ENCODE measurements at regions of chr17 and their contacts with region 1.

Region 1: DNA sequence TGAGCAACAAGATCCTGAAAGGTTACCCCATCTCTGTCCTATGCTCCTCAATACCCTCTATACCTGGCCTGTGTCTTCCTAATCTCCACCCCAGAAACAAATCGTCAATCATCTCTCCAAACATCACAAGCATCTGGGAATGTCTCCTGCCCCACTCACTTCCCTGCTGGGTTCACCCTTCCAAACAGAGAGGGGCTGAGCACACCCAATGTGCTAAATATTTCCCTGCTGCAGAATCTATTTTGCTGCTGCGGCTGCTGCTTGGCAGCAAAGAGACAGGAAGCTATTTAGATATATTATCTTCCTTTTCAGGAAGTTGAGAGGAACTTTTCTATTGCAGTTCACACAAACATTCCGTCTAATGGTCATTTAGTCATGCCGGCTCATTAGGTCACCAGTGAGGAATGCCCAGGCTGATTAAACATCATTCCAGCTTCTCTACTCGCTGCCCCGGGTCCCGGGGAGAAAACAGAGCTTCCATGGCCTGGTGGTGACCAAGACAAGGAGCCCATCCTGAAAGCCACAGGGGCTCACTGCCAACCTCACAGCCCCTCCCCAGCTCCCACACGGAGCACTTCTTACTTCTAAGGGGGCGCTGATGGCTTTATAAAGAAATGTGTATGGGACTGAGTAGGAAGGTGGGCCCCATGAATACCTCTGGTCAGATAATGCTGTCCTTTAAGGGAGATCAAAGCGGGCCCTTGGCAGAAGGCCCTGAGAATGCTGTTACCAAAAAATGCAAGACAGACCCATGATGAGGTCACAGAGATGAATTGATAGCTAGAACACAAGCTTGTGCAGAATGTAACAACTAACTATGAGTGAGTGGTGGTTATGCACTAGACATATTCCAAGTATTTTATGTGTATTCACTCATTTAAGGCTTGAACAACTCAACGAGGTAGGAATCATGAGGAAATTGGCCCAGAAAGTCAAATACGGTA is 218.3 kb downstream of the SOX9 start:
- DNase-seq: peak; percentile 97
- ATAC-seq: peak; percentile 89
- H3K4me3 ChIP-seq: no peak overlapping the region
- H3K27ac ChIP-seq: peak overlapping the region; percentile 86
- H3K4me1 ChIP-seq: peaks cover 23% of the 10 kb centered on the region
- H3K27me3 ChIP-seq: no peaks in the 10 kb centered on the region
- CTCF ChIP-seq: no peak
- POLR2A ChIP-seq: peak; percentile 53; the same call in 1 of the 2 replicates
- RAD21 ChIP-seq: peak; percentile 23; the same call in 1 of the 2 replicates

Region 2: DNA sequence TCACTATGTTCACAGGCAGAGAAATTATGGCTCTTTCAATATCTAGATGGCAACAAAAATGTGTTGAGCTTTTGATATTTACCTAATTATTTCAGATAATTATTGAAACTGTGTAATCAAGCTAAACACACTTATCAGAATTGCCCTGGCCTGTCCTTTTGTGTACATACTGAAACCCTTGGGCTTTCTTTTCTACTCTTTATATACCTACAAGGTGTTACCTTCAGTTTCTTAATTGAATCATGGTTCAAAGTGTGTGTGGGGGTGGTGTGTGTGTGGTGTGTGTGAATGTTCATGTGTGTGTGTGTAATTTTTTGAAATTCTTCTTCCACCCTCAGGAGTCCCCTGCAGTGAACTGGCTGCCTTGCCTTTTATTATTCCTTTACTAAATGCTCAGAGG is 725.1 kb before region 1 on chr17:
- CTCF ChIA-PET with region 1: no interaction called
- POLR2A ChIA-PET with region 1: no interaction called
- dilution Hi-C with region 1: no loop called
- in situ Hi-C with region 1: no loop called
- intact Hi-C with region 1: no loop called
- DNase-seq: no peak
- ATAC-seq: no peak
- H3K4me3 ChIP-seq: no peak overlapping the region
- H3K27ac ChIP-seq: no peak overlapping the region
- H3K4me1 ChIP-seq: no peaks in the 10 kb centered on the region
- H3K27me3 ChIP-seq: no peaks in the 10 kb centered on the region
- CTCF ChIP-seq: no peak
- POLR2A ChIP-seq: no peak
- RAD21 ChIP-seq: no peak

Region 3: GRCh38 chr17:72373910-72374741 is 35.0 kb after region 1 on chr17:
- CTCF ChIA-PET with region 1: no interaction called
- POLR2A ChIA-PET with region 1: no interaction called
- dilution Hi-C with region 1: no loop called
- in situ Hi-C with region 1: no loop called
- intact Hi-C with region 1: no loop called
- DNase-seq: peak; percentile 63
- ATAC-seq: peak; percentile 32
- H3K4me3 ChIP-seq: no peak overlapping the region
- H3K27ac ChIP-seq: peak overlapping the region; percentile 8
- H3K4me1 ChIP-seq: peaks cover 29% of the 10 kb centered on the region
- H3K27me3 ChIP-seq: no peaks in the 10 kb centered on the region
- CTCF ChIP-seq: no peak
- POLR2A ChIP-seq: no peak
- RAD21 ChIP-seq: no peak

Region 4: DNA sequence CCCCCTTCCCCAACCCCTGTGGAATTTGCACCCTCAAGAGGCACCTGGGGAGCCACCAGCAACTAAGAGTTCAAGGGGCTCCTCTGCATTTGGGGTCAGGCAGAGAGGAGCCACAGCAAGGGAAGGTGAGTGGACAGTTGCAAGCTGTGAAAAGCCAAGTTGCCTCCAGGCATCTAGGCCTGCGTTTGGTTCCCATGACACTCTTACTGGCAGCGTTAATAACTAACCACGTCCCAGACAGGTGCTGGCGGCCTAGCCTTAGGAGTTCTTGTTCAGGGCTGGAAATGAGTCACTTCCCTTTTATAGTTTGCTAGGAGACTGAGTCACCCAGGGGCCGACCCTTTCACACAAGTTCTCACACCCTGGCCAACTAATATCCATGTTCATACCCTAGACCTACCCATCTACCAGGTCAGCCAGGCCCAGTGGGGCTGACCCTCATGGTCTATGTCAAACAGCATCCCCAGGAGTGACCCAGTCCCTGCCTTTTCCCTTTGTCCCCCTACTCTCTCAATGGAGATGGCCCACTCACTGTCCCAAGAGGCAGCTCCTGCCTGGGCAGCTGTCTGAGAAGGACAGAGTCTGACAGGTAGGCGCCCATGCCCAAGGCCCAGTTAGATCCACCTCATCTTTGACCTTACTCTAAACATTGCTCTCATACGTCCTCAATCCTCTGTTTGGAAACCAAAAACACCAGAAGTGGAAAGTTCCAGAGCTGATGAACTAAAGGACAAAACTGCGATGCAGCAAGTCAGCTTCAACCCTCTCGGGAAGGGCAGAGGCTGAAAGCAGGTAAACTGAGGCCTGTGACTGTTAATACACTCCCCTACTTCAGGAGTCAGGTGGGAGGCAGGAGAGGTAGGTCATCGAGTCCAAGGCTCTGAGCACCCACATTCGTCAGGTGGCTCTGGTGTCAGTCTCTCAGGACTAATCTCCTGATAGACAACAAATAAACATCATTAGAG is 82.3 kb after region 1 on chr17:
- CTCF ChIA-PET with region 1: interaction called, 3 read pairs
- POLR2A ChIA-PET with region 1: no interaction called
- dilution Hi-C with region 1: no loop called
- in situ Hi-C with region 1: no loop called
- intact Hi-C with region 1: loop called (anchors 10 kb)
- DNase-seq: peak; percentile 98
- ATAC-seq: peak; percentile 76
- H3K4me3 ChIP-seq: no peak overlapping the region
- H3K27ac ChIP-seq: peak overlapping the region; percentile 13; the same call in 1 of the 2 replicates
- H3K4me1 ChIP-seq: peaks cover 23% of the 10 kb centered on the region
- H3K27me3 ChIP-seq: no peaks in the 10 kb centered on the region
- CTCF ChIP-seq: no peak
- POLR2A ChIP-seq: no peak
- RAD21 ChIP-seq: peak; percentile 39

Region 5: DNA sequence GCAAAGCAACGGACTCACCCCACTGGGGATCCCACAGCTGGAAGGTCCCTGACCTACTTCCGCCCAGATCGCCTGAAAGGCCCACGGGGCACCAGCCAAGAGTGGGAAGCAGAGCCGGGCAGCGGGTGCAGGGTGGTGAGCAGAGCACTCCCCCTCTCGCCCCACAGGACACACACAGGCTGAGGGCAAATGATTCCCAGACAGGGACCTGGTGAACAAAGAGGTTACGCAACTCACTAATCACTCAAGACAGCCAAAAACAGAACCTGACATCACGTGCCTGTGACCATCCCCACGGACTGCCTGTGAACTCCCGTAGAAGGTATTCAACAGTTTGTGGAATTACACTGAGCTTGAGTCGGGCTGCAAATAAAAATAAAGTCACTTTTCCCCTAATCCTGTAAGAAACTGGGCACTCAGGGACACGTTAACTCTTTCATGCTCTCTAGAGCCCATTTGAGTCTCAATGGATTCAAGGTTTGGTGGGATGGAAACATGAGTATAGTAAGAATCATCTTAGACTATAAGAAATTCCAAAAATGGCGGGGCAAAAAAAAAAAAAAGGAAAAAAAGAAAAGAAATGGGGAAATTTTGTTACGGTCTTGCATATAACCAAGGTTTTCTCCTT is 177.8 kb after region 1 on chr17:
- CTCF ChIA-PET with region 1: no interaction called
- POLR2A ChIA-PET with region 1: no interaction called
- dilution Hi-C with region 1: no loop called
- in situ Hi-C with region 1: no loop called
- intact Hi-C with region 1: no loop called
- DNase-seq: no peak
- ATAC-seq: no peak
- H3K4me3 ChIP-seq: no peak overlapping the region
- H3K27ac ChIP-seq: no peak overlapping the region
- H3K4me1 ChIP-seq: peaks cover 19% of the 10 kb centered on the region
- H3K27me3 ChIP-seq: no peaks in the 10 kb centered on the region
- CTCF ChIP-seq: no peak
- POLR2A ChIP-seq: no peak
- RAD21 ChIP-seq: no peak